Left colon (tissue), 2 donors: ENCODE measurements at regions of chr9 and their contacts with region 1.

Region 1: GRCh38 chr9:113657703-113658544 is 194.4 kb downstream of the RGS3 start:
- DNase-seq: peak; percentile 69 to 89
- ATAC-seq: peak; percentile 91

Region 2: GRCh38 chr9:113446323-113446740 is 211.6 kb before region 1 on chr9:
- intact Hi-C with region 1: loop called (anchors 2 to 5 kb)
- DNase-seq: no peak
- ATAC-seq: peak; percentile 63

Region 3: GRCh38 chr9:113591001-113591898 is 66.7 kb before region 1 on chr9:
- intact Hi-C with region 1: loop called (anchors 2 to 5 kb)
- DNase-seq: peak in 1 of 2 donors; percentile 81
- ATAC-seq: peak; percentile 68